H1 (cell line): ENCODE measurements at regions of chr6 and their contacts with region 1.

Region 1: DNA sequence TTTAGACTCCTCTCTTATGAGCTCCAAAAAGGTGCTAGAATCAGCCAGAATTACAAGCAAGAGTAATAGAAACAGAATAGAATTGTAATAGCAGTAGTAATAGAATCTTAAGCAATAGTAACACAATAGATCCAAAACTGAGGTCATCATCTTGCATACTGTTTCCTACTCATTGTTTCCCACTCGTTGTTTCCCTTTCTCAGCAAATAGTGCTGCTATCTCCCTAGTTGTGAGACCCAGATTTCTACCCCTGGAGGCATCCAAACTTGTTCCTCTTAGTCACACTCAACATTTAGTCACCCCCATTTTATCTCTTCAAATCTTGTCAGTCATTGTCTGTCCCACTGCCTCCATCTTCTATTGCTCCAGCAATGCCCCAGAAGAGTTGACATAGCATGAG is 356.9 kb upstream of the MARCKS start:
- DNase-seq: no peak
- H3K4me3 ChIP-seq: no peak overlapping the region
- H3K27ac ChIP-seq: no peak overlapping the region
- H3K4me1 ChIP-seq: no peaks in the 10 kb centered on the region
- H3K27me3 ChIP-seq: no peaks in the 10 kb centered on the region
- CTCF ChIP-seq: no peak
- EP300 ChIP-seq: no peak
- POLR2A ChIP-seq: no peak
- RAD21 ChIP-seq: no peak

Region 2: GRCh38 chr6:113476937-113477839 is 23.0 kb before region 1 on chr6:
- CTCF ChIA-PET with region 1: no interaction called
- POLR2A ChIA-PET with region 1: no interaction called
- DNase-seq: no peak
- H3K4me3 ChIP-seq: no peak overlapping the region
- H3K27ac ChIP-seq: no peak overlapping the region
- H3K4me1 ChIP-seq: no peaks in the 10 kb centered on the region
- H3K27me3 ChIP-seq: peaks cover 0 to 1% (median 0%) of the 10 kb centered on the region in 4 experiments; a peak in 1 of 7 replicates
- CTCF ChIP-seq: no peak
- EP300 ChIP-seq: no peak
- POLR2A ChIP-seq: no peak
- RAD21 ChIP-seq: no peak

Region 3: GRCh38 chr6:113488812-113489685 is 11.2 kb before region 1 on chr6:
- CTCF ChIA-PET with region 1: interaction called, 10 read pairs
- POLR2A ChIA-PET with region 1: no interaction called
- DNase-seq: no peak
- H3K4me3 ChIP-seq: no peak overlapping the region
- H3K27ac ChIP-seq: no peak overlapping the region
- H3K4me1 ChIP-seq: no peaks in the 10 kb centered on the region
- H3K27me3 ChIP-seq: no peaks in the 10 kb centered on the region
- CTCF ChIP-seq: peak in 2 of 3 experiments; percentile 69 to 84; a peak in 3 of 4 replicates
- EP300 ChIP-seq: no peak
- POLR2A ChIP-seq: no peak
- RAD21 ChIP-seq: peak; percentile 87

Region 4: GRCh38 chr6:113526553-113526952 is 26.3 kb after region 1 on chr6:
- CTCF ChIA-PET with region 1: no interaction called
- POLR2A ChIA-PET with region 1: no interaction called
- DNase-seq: no peak
- H3K4me3 ChIP-seq: no peak overlapping the region
- H3K27ac ChIP-seq: no peak overlapping the region
- H3K4me1 ChIP-seq: peaks cover 0 to 4% (median 0%) of the 10 kb centered on the region in 4 experiments; a peak in 1 of 7 replicates
- H3K27me3 ChIP-seq: no peaks in the 10 kb centered on the region
- CTCF ChIP-seq: no peak
- EP300 ChIP-seq: no peak
- POLR2A ChIP-seq: no peak
- RAD21 ChIP-seq: no peak

Region 5: DNA sequence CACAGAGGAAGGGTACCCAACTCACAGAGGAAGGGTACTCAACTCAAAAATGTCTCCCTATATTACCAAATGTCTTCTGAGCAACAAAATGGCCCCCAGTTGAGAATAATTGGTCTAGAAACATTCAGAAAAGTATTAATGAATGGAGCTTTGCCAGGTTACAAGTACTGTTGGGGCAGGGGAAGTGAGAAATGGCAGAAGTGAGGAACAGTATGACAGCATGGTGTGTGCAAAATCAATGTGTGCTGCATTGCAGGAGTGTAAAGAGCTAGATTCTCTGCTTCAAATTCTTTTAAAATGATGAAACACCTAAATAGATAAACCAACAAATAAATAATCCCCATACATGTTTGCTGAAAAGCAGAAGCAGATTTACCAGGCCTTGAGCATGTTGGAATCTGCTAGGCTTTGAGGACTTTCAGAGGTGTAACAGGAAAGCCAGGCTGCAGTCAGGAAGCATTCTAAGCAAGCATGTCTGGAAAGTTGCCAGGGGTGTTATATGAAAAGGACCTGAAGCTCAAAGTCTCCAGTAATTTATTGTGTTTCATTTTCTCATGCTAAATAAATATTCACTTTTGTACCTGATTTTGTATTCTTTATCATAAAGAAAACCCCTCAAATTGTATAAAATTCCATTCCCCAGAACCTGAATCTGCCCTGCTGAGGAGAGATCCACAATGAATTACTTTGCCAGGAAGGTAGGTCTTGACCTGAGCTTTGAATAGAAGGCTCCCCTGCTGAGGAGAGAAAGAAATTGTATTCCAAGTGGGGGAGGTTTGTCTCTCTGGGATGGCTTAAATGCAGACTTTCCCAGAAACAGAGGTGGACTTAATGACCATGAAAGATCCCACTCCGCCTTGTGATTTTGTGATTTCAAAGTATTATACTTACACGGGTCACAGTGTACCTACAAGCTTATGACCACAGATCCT is 91.9 kb after region 1 on chr6:
- CTCF ChIA-PET with region 1: no interaction called
- POLR2A ChIA-PET with region 1: no interaction called
- DNase-seq: no peak
- H3K4me3 ChIP-seq: peak overlapping the region in 1 of 4 experiments; percentile 12; a peak in 1 of 8 replicates
- H3K27ac ChIP-seq: no peak overlapping the region
- H3K4me1 ChIP-seq: peaks cover 2 to 16% (median 12%) of the 10 kb centered on the region in 4 experiments; a peak in 5 of 7 replicates
- H3K27me3 ChIP-seq: no peaks in the 10 kb centered on the region
- CTCF ChIP-seq: no peak
- EP300 ChIP-seq: no peak
- POLR2A ChIP-seq: no peak
- RAD21 ChIP-seq: no peak